AG04449 (cell line): ENCODE measurements at regions of chr1 and their contacts with region 1.

Region 1: DNA sequence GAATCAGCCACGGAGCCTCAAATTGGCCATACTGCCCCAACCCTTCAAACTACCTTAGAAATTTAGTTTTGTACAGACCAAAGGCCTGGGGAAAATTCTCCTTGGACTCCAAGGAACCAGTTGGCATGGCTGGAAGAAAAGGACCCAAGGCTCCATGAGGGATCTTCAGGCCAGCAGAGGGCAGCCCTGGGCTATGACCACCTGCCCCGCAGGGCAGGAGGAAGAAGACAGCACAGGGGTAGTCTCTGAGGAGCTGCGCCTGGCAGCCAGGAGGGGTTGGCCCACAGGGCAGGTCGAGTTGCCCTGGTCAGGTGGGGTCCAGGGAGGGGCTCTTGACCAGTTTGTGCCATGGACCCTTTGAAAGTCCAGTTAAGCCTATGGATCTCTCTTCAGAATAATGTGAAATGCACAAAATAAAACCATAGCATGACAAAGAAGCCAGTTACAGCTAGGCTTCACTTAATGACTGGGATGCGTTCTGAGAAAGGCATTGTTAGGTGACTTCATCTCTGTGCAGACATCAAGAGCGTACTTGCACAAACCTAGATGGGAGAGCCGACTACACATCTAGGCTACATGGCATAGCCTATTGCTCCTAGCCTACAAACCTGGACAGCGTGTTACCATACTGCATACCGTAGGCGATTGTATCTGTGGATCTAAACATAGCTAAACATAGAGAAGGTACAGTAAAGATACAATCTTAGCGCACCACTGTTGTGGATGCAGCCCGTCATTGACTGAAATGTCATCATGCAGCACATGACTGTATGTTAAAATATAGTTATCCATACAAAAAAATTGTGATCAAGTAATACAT is 26.1 kb downstream of the CACNA1S start:
- DNase-seq: no peak
- H3K4me3 ChIP-seq: no peak overlapping the region
- CTCF ChIP-seq: peak; percentile 76

Region 2: DNA sequence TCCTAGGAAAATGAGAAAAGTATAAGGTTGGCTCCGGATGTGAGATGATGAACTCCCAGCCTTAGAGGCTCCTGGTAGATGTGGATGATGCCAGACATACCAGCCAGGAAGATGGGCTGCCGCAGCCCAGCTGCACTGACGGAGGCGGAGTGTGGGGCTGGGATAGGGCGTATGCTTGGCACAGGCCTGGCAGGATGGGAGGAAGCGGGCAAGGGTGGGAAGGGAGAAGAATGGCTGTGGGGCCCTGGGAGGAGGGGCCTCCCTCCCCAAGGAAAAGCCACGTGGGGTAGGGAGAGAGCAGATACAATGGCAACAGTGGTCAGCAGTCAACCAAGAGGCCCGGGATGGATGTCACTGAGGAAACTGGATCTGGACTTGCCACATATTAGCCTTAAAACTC is 21.3 kb before region 1 on chr1:
- CTCF ChIA-PET with region 1: interaction called, 47 read pairs
- POLR2A ChIA-PET with region 1: no interaction called
- DNase-seq: no peak
- H3K4me3 ChIP-seq: no peak overlapping the region
- CTCF ChIP-seq: no peak

Region 3: DNA sequence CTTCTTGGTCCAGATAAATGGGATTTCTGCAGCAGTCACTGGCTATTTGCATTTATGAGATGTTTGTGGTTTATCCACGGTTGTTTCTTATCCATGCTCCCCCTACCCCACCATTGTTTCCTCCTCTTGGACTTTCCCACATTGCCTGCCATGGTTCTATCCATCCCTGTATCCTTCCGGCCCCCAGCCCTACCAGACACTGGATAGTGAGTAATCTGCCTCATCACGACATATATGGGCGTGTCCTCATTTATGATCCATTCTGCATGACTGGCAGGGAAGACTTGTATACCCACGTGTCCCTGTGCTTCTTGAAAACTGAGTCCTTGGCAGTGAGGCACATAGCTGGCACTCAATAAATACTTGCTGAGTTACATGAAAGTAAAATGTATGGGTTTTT is 14.0 kb before region 1 on chr1:
- CTCF ChIA-PET with region 1: interaction called, 47 read pairs
- POLR2A ChIA-PET with region 1: no interaction called
- DNase-seq: no peak
- H3K4me3 ChIP-seq: no peak overlapping the region
- CTCF ChIP-seq: no peak

Region 4: DNA sequence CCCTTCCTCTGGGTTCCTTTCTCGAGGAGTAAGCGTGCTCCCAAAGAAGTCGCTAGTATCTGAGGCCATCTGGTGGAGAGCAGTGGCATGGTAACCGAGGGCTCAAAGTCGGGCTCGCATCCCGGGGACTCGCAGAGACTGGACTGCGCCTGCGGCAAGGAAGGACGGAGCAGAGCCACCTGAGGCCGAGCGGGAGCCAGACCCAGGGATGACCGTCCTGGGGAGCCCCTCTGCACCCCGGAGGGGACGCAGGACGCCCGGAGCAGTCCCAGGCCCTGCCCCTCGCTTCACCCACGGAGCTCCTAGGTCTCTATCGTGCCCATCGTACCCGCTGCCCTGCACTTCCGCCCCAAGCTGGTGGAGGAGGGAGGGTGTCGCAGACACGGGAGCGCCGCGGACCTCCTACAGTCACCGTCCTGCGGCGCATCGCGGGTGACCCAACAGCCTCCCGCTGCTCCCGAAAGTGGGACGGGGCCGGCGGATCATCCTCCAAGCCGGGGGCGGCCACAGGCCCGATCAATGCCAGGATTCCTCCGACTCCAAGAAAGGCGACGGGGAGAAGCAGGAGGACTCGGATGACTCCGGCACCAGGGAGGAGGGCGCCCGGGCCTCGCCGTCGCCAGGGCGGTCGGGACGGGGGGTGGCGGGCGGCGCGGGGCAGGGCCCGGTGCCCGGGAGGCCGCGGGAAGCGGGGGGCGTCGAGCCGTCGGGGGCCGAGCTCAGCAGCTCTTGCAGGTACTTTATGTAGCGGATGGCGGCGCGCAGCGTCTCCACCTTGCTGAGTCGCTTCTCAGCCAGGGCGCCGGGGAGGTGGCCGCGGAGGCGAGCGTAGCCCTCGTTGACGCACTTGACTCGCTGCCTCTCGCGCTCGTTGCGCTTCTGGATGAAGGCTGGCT is 28.4 kb after region 1 on chr1:
- CTCF ChIA-PET with region 1: interaction called, 102 read pairs
- POLR2A ChIA-PET with region 1: no interaction called
- DNase-seq: no peak
- H3K4me3 ChIP-seq: peak overlapping the region; percentile 67
- CTCF ChIP-seq: peak; percentile 94

Region 5: DNA sequence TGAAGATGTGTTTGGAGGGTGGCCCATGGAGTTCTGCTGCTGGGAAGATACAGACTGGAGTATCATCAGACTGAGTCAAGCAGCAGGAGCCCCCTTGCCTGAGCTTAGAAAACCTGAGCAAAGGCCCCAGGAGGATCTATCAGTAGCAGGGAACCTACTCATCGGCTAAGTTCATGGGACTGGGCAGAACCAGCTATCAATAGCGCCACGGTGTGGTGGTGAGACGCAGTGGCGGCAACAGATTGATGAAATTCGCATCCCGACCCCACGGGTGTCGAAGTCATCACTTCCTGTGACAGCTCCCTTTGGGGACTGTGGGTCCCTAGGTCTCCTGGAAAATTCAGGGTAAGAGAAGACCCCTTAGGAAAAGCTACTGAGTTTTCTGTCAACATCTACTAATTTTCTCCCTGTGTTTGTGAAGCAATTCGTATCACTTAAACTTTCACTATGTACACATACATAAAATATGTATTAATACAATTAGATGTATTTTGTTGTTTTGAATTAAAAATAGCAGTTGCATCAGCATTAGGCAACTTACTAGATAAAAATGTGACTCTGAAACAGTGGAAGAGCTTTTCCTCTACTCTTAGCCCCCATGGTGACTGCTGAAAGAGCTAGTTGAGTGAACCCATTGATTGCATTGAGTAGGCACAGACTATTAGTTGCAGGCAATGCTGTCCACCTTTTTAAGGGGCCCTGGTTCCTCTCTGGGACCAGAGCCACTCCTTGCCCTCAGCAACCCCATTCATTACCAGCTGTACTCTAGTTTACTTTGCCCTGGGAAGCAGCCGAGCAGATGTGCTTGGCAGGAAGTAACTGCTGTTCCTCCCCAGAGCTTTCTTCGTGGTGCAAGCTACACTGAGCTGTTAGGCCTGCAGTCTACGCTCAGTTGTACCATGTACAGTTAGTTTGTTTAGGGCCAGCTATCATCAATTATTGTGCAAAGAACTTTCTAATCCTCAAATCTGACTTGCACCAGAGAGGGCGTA is 33.4 kb after region 1 on chr1:
- CTCF ChIA-PET with region 1: interaction called, 102 read pairs
- POLR2A ChIA-PET with region 1: no interaction called
- DNase-seq: no peak
- H3K4me3 ChIP-seq: no peak overlapping the region
- CTCF ChIP-seq: peak; percentile 55

Region 6: GRCh38 chr1:201184307-201185122 is 98.4 kb after region 1 on chr1:
- CTCF ChIA-PET with region 1: interaction called, 13 read pairs
- POLR2A ChIA-PET with region 1: no interaction called
- DNase-seq: peak; percentile 57
- H3K4me3 ChIP-seq: no peak overlapping the region
- CTCF ChIP-seq: peak; percentile 86

Region 7: GRCh38 chr1:201219481-201220359 is 133.6 kb after region 1 on chr1:
- CTCF ChIA-PET with region 1: interaction called, 26 read pairs
- POLR2A ChIA-PET with region 1: no interaction called
- DNase-seq: no peak
- H3K4me3 ChIP-seq: no peak overlapping the region
- CTCF ChIP-seq: no peak

Region 8: DNA sequence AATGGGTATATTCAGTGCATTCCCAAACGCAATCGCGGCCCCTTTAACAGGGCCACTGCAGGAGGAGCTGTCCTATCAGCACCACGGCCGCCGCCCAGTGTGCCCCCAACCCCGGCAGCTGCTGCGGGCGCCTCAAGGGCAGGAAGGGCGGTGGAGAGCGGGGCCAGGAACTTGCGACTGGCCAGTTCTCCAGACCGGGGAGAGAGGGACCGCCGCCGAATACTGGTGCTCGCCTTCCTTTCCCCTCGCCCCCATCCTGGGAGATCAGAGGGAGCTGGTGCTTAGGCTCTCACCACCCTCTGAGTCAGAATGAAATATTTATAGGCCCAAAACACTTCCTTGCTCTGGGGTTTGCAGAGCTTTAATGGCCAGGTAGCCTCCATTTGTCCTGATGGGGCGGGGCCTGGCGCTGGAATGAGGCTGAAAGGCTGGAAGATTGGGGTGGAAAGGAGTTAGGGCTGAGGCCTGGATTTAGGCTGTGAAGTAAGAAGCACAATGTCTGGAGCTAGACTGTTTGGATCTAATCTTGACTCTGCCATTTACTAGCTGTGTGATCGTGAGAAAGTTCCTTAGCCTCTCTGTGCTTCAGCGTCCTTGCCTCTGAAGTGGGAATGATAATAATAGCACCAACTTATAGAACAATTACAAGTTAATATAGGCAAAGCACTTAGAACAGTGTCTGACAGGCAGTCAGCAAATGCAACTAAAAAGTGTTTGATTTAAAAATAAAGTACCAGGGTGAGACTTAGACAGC is 528.3 kb after region 1 on chr1:
- CTCF ChIA-PET with region 1: no interaction called
- POLR2A ChIA-PET with region 1: no interaction called
- DNase-seq: no peak
- H3K4me3 ChIP-seq: no peak overlapping the region
- CTCF ChIP-seq: no peak